A673 (cell line): ENCODE measurements at regions of chr15 and their contacts with region 1.

Region 1: GRCh38 chr15:65952425-65953053 is 83.2 kb downstream of the RAB11A start:
- DNase-seq: peak; percentile 56
- H3K4me3 ChIP-seq: no peak overlapping the region
- H3K27ac ChIP-seq: no peak overlapping the region
- H3K4me1 ChIP-seq: no peaks in the 10 kb centered on the region
- H3K27me3 ChIP-seq: no peaks in the 10 kb centered on the region
- CTCF ChIP-seq: no peak

Region 2: DNA sequence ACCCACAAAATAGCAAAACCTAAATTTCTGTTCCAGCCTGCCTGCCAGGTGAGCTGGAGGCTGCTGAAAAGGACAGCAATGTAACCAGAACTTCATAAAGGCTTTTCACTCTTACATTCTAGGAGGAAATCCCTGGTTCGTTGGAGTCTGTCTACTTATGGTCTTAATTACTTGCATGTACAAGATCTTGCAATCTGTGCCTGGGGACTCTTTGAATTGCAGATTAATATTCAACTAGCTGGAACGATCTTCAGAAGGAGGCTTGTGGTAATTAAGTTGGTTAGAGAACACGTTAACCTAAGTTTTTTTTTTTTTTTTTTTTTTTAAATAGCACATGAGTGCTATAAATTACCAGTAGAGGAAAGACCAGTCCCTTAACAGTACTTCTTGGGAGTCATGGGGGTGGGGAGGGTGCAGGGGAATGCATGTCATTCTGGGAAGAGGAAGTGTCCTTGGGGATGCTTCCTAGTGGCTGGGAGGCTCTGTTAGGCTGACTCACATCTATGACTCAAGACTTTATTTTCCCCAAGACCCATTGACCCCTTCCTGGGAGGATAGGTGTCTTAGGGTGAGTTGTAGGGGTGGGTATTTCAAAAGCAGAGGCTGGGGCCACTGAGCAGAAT is 56.5 kb after region 1 on chr15:
- CTCF ChIA-PET with region 1: no interaction called
- POLR2A ChIA-PET with region 1: no interaction called
- intact Hi-C with region 1: no loop called
- DNase-seq: peak; percentile 24
- H3K4me3 ChIP-seq: no peak overlapping the region
- H3K27ac ChIP-seq: no peak overlapping the region
- H3K4me1 ChIP-seq: no peaks in the 10 kb centered on the region
- H3K27me3 ChIP-seq: peaks cover 2% of the 10 kb centered on the region
- CTCF ChIP-seq: no peak

Region 3: GRCh38 chr15:66044837-66045236 is 92.3 kb after region 1 on chr15:
- CTCF ChIA-PET with region 1: no interaction called
- POLR2A ChIA-PET with region 1: interaction called, 22 read pairs
- intact Hi-C with region 1: no loop called
- DNase-seq: no peak
- H3K4me3 ChIP-seq: no peak overlapping the region
- H3K27ac ChIP-seq: no peak overlapping the region
- H3K4me1 ChIP-seq: no peaks in the 10 kb centered on the region
- H3K27me3 ChIP-seq: peaks cover 42% of the 10 kb centered on the region
- CTCF ChIP-seq: no peak

Region 4: DNA sequence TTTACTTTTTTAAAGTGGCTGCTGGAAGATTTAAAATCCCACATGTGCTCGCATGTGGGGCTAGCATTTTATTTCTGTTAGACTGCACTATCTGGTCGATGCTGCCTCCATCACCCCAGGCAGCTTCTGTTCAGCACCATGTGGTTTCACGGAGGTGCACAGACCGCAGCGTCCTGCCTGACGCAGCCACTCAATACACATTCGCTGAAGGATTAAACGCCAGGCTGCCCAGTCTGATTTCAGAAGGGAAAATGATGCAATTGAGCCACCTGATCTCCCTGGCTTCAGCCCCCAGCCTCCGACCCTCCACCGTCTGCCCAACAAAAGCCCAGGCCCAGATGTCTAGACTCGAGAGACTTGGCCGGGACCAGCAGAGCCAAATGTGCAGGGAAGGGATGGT is 216.5 kb after region 1 on chr15:
- CTCF ChIA-PET with region 1: no interaction called
- POLR2A ChIA-PET with region 1: no interaction called
- intact Hi-C with region 1: no loop called
- DNase-seq: no peak
- H3K4me3 ChIP-seq: no peak overlapping the region
- H3K27ac ChIP-seq: no peak overlapping the region
- H3K4me1 ChIP-seq: no peaks in the 10 kb centered on the region
- H3K27me3 ChIP-seq: peaks cover 7% of the 10 kb centered on the region
- CTCF ChIP-seq: no peak